HepG2 (cell line): ENCODE measurements at regions of chrX and their contacts with region 1.

Region 1: DNA sequence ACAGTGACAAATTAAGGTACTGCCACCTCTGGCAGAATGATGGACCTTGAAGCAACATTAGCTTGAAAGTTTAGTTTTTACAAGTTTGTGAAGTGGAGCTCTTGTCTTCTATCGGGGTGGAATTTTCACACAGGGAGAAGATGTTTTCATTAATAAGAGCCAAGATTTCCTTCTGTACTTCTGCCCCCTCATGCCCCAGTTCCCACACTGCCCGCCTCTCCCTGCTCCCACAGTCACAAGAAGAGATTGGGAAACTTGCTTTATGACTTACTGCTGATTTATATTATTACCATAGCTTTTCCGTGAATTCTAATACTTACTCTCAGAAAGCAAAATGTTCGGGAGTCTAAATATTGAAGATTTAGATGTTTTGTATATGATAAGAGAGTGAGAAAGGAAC is 539.8 kb upstream of the ARX start:
- DNase-seq: no peak
- ATAC-seq: no peak
- H3K4me3 ChIP-seq: no peak overlapping the region
- H3K27ac ChIP-seq: no peak overlapping the region
- H3K4me1 ChIP-seq: no peaks in the 10 kb centered on the region
- H3K27me3 ChIP-seq: no peaks in the 10 kb centered on the region
- CTCF ChIP-seq: no peak
- EP300 ChIP-seq: no peak
- POLR2A ChIP-seq: no peak
- RAD21 ChIP-seq: no peak

Region 2: DNA sequence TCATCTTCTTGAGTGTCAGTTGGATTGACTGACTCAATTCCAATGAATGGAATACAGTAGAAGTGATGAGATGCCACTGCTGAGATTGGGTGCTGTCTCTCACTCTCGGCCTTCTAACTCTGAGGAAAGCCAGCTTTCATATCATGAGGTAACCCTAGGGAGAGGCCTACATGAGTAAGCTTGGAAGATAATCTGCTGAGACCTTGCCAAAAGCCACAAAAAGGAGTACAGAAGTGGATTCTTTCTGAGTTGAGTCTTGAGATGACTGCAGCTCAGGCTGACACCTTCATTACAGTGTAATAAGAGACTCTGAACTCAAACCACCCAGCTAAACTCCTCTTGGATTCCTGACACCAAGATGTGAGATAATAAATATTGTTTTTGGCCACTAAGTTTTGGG is 45.3 kb after region 1 on chrX:
- CTCF ChIA-PET with region 1: no interaction called
- POLR2A ChIA-PET with region 1: no interaction called
- in situ Hi-C with region 1: no loop called
- intact Hi-C with region 1: no loop called
- DNase-seq: no peak
- ATAC-seq: no peak
- H3K4me3 ChIP-seq: no peak overlapping the region
- H3K27ac ChIP-seq: no peak overlapping the region
- H3K4me1 ChIP-seq: no peaks in the 10 kb centered on the region
- H3K27me3 ChIP-seq: no peaks in the 10 kb centered on the region
- CTCF ChIP-seq: no peak
- EP300 ChIP-seq: no peak
- POLR2A ChIP-seq: no peak
- RAD21 ChIP-seq: no peak

Region 3: DNA sequence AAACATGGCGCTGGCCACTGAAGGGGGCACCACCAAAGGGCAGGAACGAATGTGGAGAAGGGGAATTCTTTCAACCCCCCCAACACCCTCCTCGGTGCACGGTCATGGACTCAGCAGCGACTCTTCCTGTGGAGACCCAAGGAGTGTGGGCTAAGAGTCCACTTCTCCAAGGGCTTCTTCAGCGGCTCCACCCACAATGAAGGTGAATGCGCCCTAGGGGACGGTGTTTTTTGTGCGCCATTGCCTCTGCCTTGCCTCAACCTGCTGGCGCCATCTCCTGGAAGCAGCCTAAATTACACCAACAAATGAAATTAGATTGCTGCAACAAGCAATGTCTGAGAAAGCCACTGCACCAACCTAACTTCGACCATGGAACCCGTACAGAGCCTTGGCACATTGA is 413.4 kb after region 1 on chrX:
- CTCF ChIA-PET with region 1: no interaction called
- POLR2A ChIA-PET with region 1: no interaction called
- in situ Hi-C with region 1: no loop called
- intact Hi-C with region 1: no loop called
- DNase-seq: peak; percentile 0
- ATAC-seq: no peak
- H3K4me3 ChIP-seq: no peak overlapping the region
- H3K27ac ChIP-seq: no peak overlapping the region
- H3K4me1 ChIP-seq: no peaks in the 10 kb centered on the region
- H3K27me3 ChIP-seq: no peaks in the 10 kb centered on the region
- CTCF ChIP-seq: peak; percentile 54
- EP300 ChIP-seq: no peak
- POLR2A ChIP-seq: no peak
- RAD21 ChIP-seq: no peak

Region 4: DNA sequence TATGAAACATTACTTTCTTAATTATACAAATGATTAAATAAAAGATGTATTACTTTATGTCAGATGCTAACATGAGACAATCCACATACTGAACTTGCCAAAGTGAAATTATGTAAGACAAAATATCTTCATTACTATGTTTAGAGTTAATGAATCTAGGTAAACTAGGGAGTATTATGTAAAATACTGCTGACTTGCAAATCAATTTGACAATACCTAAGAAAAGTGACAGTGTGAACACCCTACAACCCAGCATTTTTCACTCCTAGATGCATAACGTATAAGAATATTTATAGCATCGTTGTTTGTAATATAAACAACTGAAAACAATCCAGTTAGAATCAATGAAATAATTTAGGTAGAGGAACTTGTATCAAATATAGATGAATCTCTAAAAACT is 1206.7 kb after region 1 on chrX:
- CTCF ChIA-PET with region 1: no interaction called
- POLR2A ChIA-PET with region 1: no interaction called
- in situ Hi-C with region 1: no loop called
- intact Hi-C with region 1: loop called (anchors 5 kb)
- DNase-seq: no peak
- ATAC-seq: no peak
- H3K4me3 ChIP-seq: no peak overlapping the region
- H3K27ac ChIP-seq: no peak overlapping the region
- H3K4me1 ChIP-seq: no peaks in the 10 kb centered on the region
- H3K27me3 ChIP-seq: no peaks in the 10 kb centered on the region
- CTCF ChIP-seq: no peak
- EP300 ChIP-seq: no peak
- POLR2A ChIP-seq: no peak
- RAD21 ChIP-seq: no peak